Uterus (tissue), 4 donors: ENCODE measurements at regions of chr6 and their contacts with region 1.

Region 1: GRCh38 chr6:111605100-111605751 is 452 bp downstream of the TRAF3IP2 start:
- DNase-seq: peak; percentile 89 to 92
- H3K4me3 ChIP-seq: peak overlapping the region; percentile 53 to 62
- H3K27ac ChIP-seq: peak overlapping the region; percentile 97 to 99
- H3K4me1 ChIP-seq: peaks cover 9 to 19% of the 10 kb centered on the region in 2 donors
- H3K27me3 ChIP-seq: no peaks in the 10 kb centered on the region
- CTCF ChIP-seq: peak in 1 of 4 experiments; percentile 5
- POLR2A ChIP-seq: peak; percentile 29 to 38

Region 2: GRCh38 chr6:111483736-111484632 is 121.2 kb before region 1 on chr6:
- intact Hi-C with region 1: loop called (anchors 5 kb)
- DNase-seq: peak; percentile 94 to 98
- H3K4me3 ChIP-seq: peak overlapping the region; percentile 76 to 86
- H3K27ac ChIP-seq: peak overlapping the region; percentile 99 to 100
- H3K4me1 ChIP-seq: peaks cover 0 to 7% of the 10 kb centered on the region in 2 donors
- H3K27me3 ChIP-seq: no peaks in the 10 kb centered on the region
- CTCF ChIP-seq: peak in 2 of 4 experiments; percentile 6 to 7
- POLR2A ChIP-seq: peak; percentile 24 to 81

Region 3: GRCh38 chr6:111559188-111560097 is 45.8 kb before region 1 on chr6:
- intact Hi-C with region 1: loop called (anchors 5 kb)
- DNase-seq: peak; percentile 67 to 76
- H3K4me3 ChIP-seq: no peak overlapping the region
- H3K27ac ChIP-seq: peak overlapping the region; percentile 78 to 93
- H3K4me1 ChIP-seq: peaks cover 16 to 35% of the 10 kb centered on the region in 2 donors
- H3K27me3 ChIP-seq: no peaks in the 10 kb centered on the region
- CTCF ChIP-seq: no peak
- POLR2A ChIP-seq: no peak